ENCODE measurements at regions of chrX and their contacts with region 1.

Region 1: GRCh38 chrX:86133761-86134160 is 14.5 kb upstream of the DACH2 start:
- DNase-seq: no peak
- ATAC-seq: peak; percentile 57
- H3K4me3 ChIP-seq: no peak overlapping the region
- H3K27ac ChIP-seq: no peak overlapping the region
- H3K4me1 ChIP-seq: no peaks in the 10 kb centered on the region
- H3K27me3 ChIP-seq: no peaks in the 10 kb centered on the region
- CTCF ChIP-seq: peak; percentile 40 to 47 (median 45); a peak in 4 of 6 replicates
- EP300 ChIP-seq: no peak
- POLR2A ChIP-seq: no peak
- RAD21 ChIP-seq: peak; percentile 39; the same call in 1 of the 2 replicates

Region 2: GRCh38 chrX:85561231-85561630 is 572.5 kb before region 1 on chrX:
- CTCF ChIA-PET with region 1: no interaction called
- POLR2A ChIA-PET with region 1: no interaction called
- RAD21 ChIA-PET with region 1: no interaction called
- SMC1A ChIA-PET with region 1: no interaction called
- in situ Hi-C with region 1: no loop called
- intact Hi-C with region 1: no loop called
- DNase-seq: no peak
- ATAC-seq: no peak
- H3K4me3 ChIP-seq: no peak overlapping the region
- H3K27ac ChIP-seq: no peak overlapping the region
- H3K4me1 ChIP-seq: no peaks in the 10 kb centered on the region
- H3K27me3 ChIP-seq: no peaks in the 10 kb centered on the region
- CTCF ChIP-seq: no peak
- EP300 ChIP-seq: no peak
- POLR2A ChIP-seq: no peak
- RAD21 ChIP-seq: no peak

Region 3: DNA sequence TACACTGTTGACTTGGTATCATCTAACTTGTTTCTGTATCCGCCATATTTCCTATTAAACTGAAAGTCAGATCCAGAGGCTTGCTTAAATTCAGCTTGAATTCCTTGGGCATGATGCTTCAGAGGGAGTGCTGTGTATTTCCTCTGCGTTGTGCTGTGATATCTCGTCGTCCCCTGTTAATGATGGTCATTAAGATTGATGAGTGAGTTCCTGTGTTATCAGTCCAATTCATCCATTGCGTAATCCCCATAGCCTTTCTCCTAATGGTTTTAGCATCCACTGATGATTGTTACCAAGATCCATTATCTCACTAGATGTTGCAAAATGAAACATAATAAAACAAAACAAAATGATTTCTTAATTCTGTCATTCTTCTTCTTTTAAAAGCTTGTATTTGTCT is 55.1 kb before region 1 on chrX:
- CTCF ChIA-PET with region 1: no interaction called
- POLR2A ChIA-PET with region 1: no interaction called
- RAD21 ChIA-PET with region 1: no interaction called
- SMC1A ChIA-PET with region 1: no interaction called
- in situ Hi-C with region 1: loop called (anchors 5 kb)
- intact Hi-C with region 1: no loop called
- DNase-seq: no peak
- ATAC-seq: no peak
- H3K4me3 ChIP-seq: no peak overlapping the region
- H3K27ac ChIP-seq: no peak overlapping the region
- H3K4me1 ChIP-seq: no peaks in the 10 kb centered on the region
- H3K27me3 ChIP-seq: no peaks in the 10 kb centered on the region
- CTCF ChIP-seq: no peak
- EP300 ChIP-seq: no peak
- POLR2A ChIP-seq: no peak
- RAD21 ChIP-seq: no peak

Region 4: GRCh38 chrX:86192827-86193226 is 59.1 kb after region 1 on chrX:
- CTCF ChIA-PET with region 1: no interaction called
- POLR2A ChIA-PET with region 1: no interaction called
- RAD21 ChIA-PET with region 1: no interaction called
- SMC1A ChIA-PET with region 1: no interaction called
- in situ Hi-C with region 1: no loop called
- intact Hi-C with region 1: no loop called
- DNase-seq: no peak
- ATAC-seq: no peak
- H3K4me3 ChIP-seq: no peak overlapping the region
- H3K27ac ChIP-seq: no peak overlapping the region
- H3K4me1 ChIP-seq: no peaks in the 10 kb centered on the region
- H3K27me3 ChIP-seq: no peaks in the 10 kb centered on the region
- CTCF ChIP-seq: no peak
- EP300 ChIP-seq: no peak
- POLR2A ChIP-seq: no peak
- RAD21 ChIP-seq: no peak

Measured in GM12878 (cell line).